IMR-90 (cell line): ENCODE measurements at regions of chr17 and their contacts with region 1.

Region 1: DNA sequence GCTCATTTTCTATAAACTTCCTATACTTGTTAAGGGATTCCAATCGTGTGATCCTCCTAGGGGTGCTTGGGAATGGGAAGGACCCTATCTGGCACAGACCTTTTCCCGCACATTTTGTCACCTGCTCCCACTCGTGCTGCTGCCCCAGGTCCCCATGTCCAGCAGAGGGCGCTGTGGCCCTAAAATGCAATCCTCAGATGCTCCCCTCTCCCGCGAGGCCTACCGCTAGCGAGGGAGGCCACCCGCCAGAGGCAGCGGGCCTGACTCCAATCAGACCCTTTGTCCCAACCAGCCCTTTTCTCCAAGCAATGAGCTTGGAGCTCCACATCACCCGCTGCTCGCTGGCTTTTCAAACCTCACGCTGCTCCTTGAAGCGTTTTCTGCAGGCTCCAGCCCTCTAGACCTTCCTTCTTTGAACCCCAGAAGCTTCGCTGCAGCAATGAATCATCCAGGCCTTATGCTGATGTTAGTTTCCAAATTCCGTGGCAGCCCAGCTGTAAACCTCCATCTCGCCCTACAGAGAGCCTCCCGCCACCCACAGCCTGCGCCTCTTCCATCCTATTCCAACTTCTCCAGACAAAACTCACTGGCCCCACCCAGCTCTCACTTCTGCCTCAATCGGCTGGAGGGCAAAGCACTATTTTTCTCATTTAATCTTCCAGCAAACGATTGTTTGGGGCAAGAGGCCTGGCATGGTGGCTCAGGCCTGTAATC is 23.6 kb upstream of the FZD2 start:
- DNase-seq: peak; percentile 90
- ATAC-seq: peak; percentile 83
- H3K4me3 ChIP-seq: peak overlapping the region; percentile 2; the same call in 1 of the 2 replicates
- H3K27ac ChIP-seq: peak overlapping the region; percentile 61
- H3K4me1 ChIP-seq: peaks cover 12% of the 10 kb centered on the region
- H3K27me3 ChIP-seq: no peaks in the 10 kb centered on the region
- CTCF ChIP-seq: peak; percentile 98
- POLR2A ChIP-seq: peak; percentile 60; the same call in 1 of the 2 replicates
- RAD21 ChIP-seq: peak; percentile 99

Region 2: GRCh38 chr17:44314869-44315661 is 218.6 kb before region 1 on chr17:
- CTCF ChIA-PET with region 1: no interaction called
- POLR2A ChIA-PET with region 1: no interaction called
- dilution Hi-C with region 1: no loop called
- in situ Hi-C with region 1: no loop called
- intact Hi-C with region 1: no loop called
- DNase-seq: no peak
- ATAC-seq: peak; percentile 77
- H3K4me3 ChIP-seq: peak overlapping the region; percentile 52
- H3K27ac ChIP-seq: no peak overlapping the region
- H3K4me1 ChIP-seq: peaks cover 4% of the 10 kb centered on the region; the same call in 1 of the 2 replicates
- H3K27me3 ChIP-seq: peaks cover 63% of the 10 kb centered on the region
- CTCF ChIP-seq: no peak
- POLR2A ChIP-seq: no peak
- RAD21 ChIP-seq: no peak

Region 3: DNA sequence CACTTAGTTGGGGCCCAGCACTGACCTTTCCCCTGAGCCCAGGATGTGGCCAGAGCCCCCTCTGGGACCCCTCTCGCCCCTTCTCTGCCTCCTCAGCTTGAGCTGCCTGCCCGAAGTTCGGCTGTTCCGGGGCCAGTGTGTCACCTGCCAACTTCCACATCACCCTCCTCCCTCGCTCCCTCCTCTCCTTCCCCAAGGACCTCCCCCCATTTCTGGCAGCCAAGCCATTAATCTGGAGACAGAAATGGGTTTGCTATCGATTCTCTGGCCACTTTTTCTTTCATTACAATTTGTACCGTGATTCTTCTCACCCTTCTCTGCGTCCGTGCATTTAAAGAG is 216.3 kb after region 1 on chr17:
- CTCF ChIA-PET with region 1: no interaction called
- POLR2A ChIA-PET with region 1: no interaction called
- dilution Hi-C with region 1: no loop called
- in situ Hi-C with region 1: no loop called
- intact Hi-C with region 1: no loop called
- DNase-seq: no peak
- ATAC-seq: no peak
- H3K4me3 ChIP-seq: no peak overlapping the region
- H3K27ac ChIP-seq: no peak overlapping the region
- H3K4me1 ChIP-seq: no peaks in the 10 kb centered on the region
- H3K27me3 ChIP-seq: no peaks in the 10 kb centered on the region
- CTCF ChIP-seq: no peak
- POLR2A ChIP-seq: no peak
- RAD21 ChIP-seq: no peak

Region 4: GRCh38 chr17:44767493-44767892 is 233.8 kb after region 1 on chr17:
- CTCF ChIA-PET with region 1: no interaction called
- POLR2A ChIA-PET with region 1: no interaction called
- dilution Hi-C with region 1: no loop called
- in situ Hi-C with region 1: no loop called
- intact Hi-C with region 1: loop called (anchors 10 kb)
- DNase-seq: no peak
- ATAC-seq: no peak
- H3K4me3 ChIP-seq: no peak overlapping the region
- H3K27ac ChIP-seq: no peak overlapping the region
- H3K4me1 ChIP-seq: no peaks in the 10 kb centered on the region
- H3K27me3 ChIP-seq: peaks cover 15% of the 10 kb centered on the region; the same call in 1 of the 2 replicates
- CTCF ChIP-seq: no peak
- POLR2A ChIP-seq: no peak
- RAD21 ChIP-seq: no peak